ENCODE measurements at regions of chr10 and their contacts with region 1.

Region 1: DNA sequence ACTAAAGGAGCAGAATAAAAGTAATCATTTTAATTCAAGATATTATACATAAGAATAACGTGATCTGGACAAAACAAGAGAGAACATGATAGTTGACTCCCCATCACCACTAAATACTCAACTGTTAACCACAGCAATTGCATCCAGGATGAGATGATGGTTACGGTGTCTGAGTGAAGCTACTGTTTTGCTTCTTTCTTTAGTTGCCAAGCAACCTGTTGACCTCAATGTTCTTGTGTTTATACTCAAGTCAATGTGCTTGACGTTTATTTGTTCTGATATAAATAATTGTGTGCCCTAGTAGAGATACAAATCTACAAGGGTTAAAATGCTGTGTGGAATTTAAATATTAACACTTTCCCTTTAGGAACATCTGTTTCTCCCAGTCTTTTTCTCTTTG is 31.4 kb upstream of the MPP7 start:
- DNase-seq: peak; percentile 57
- H3K4me3 Mint-ChIP-seq: peak overlapping the region; percentile 80
- H3K27ac Mint-ChIP-seq: peak overlapping the region; percentile 99
- H3K4me1 Mint-ChIP-seq: peaks cover 78% of the 10 kb centered on the region
- H3K27me3 Mint-ChIP-seq: peaks cover 4% of the 10 kb centered on the region

Region 2: GRCh38 chr10:28367929-28368484 is 33.7 kb after region 1 on chr10:
- CTCF ChIA-PET with region 1: interaction called, 24 read pairs
- DNase-seq: peak; percentile 81
- H3K4me3 Mint-ChIP-seq: peak overlapping the region; percentile 62
- H3K27ac Mint-ChIP-seq: peak overlapping the region; percentile 97
- H3K4me1 Mint-ChIP-seq: peaks cover 60% of the 10 kb centered on the region
- H3K27me3 Mint-ChIP-seq: peaks cover 4% of the 10 kb centered on the region

Region 3: GRCh38 chr10:28410420-28411135 is 76.3 kb after region 1 on chr10:
- CTCF ChIA-PET with region 1: no interaction called
- DNase-seq: no peak
- H3K4me3 Mint-ChIP-seq: no peak overlapping the region
- H3K27ac Mint-ChIP-seq: no peak overlapping the region
- H3K4me1 Mint-ChIP-seq: peaks cover 12% of the 10 kb centered on the region
- H3K27me3 Mint-ChIP-seq: peaks cover 25% of the 10 kb centered on the region

Region 4: GRCh38 chr10:28432210-28432676 is 97.9 kb after region 1 on chr10:
- CTCF ChIA-PET with region 1: no interaction called
- DNase-seq: peak; percentile 27
- H3K4me3 Mint-ChIP-seq: no peak overlapping the region
- H3K27ac Mint-ChIP-seq: no peak overlapping the region
- H3K4me1 Mint-ChIP-seq: peaks cover 8% of the 10 kb centered on the region
- H3K27me3 Mint-ChIP-seq: peaks cover 14% of the 10 kb centered on the region